Breast epithelium (tissue), 4 donors: ENCODE measurements at regions of chr7 and their contacts with region 1.

Region 1: GRCh38 chr7:156147104-156147503 is 334.8 kb upstream of the SHH start:
- DNase-seq: no peak
- H3K4me3 ChIP-seq: no peak overlapping the region
- H3K27ac ChIP-seq: no peak overlapping the region
- H3K4me1 ChIP-seq: no peaks in the 10 kb centered on the region
- H3K27me3 ChIP-seq: peaks cover 0 to 7% of the 10 kb centered on the region in 2 donors
- CTCF ChIP-seq: no peak
- POLR2A ChIP-seq: no peak

Region 2: DNA sequence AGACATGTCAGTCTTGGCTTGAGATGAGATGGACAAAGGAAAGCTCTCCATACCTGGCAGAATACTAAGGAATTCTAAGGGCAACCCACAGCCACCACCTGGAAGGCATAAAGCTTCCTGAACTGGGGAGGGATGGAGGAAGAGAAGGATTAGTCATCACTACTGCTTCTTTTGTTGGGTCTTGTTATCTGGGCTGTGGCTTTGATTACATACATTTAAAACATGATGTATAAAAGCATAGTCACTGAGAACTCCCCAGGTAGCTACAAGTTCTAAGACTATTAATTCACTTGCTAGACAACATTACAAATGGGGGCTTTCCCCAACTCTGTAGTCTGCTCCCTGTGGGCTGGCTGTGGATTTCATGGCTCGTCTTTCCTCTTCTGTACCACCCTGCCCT is 444.5 kb before region 1 on chr7:
- intact Hi-C with region 1: loop called (anchors 10 kb)
- DNase-seq: no peak
- H3K4me3 ChIP-seq: no peak overlapping the region
- H3K27ac ChIP-seq: no peak overlapping the region
- H3K4me1 ChIP-seq: no peaks in the 10 kb centered on the region
- H3K27me3 ChIP-seq: no peaks in the 10 kb centered on the region
- CTCF ChIP-seq: no peak
- POLR2A ChIP-seq: no peak

Region 3: GRCh38 chr7:155975490-155975889 is 171.6 kb before region 1 on chr7:
- intact Hi-C with region 1: no loop called
- DNase-seq: peak in 1 of 2 donors; percentile 20
- H3K4me3 ChIP-seq: no peak overlapping the region
- H3K27ac ChIP-seq: no peak overlapping the region
- H3K4me1 ChIP-seq: no peaks in the 10 kb centered on the region
- H3K27me3 ChIP-seq: peaks cover 0 to 18% of the 10 kb centered on the region in 2 donors
- CTCF ChIP-seq: no peak
- POLR2A ChIP-seq: no peak

Region 4: DNA sequence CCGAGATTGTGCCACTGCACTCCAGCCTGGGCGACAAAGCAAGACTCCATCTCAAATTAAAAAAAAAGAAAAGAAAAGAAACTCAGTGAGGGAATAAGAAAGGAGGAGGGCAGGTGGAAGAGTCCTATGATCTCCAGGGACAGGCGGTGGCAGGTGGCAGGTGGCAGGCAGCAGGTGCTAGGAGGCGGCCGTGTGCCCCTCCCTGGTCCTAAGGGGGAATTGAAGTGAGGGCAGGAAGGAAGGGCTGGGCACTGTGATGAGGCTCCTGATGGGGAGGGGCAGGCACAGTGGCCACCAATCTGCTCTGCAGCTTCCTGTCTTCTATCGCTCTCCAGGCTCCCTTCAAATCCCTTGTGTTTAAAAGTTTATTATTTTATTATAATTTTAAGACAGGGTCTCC is 950.5 kb after region 1 on chr7:
- intact Hi-C with region 1: no loop called
- DNase-seq: no peak
- H3K4me3 ChIP-seq: no peak overlapping the region
- H3K27ac ChIP-seq: no peak overlapping the region
- H3K4me1 ChIP-seq: no peaks in the 10 kb centered on the region
- H3K27me3 ChIP-seq: no peaks in the 10 kb centered on the region
- CTCF ChIP-seq: no peak
- POLR2A ChIP-seq: no peak